ENCODE measurements at regions of chr19 and their contacts with region 1.

Region 1: DNA sequence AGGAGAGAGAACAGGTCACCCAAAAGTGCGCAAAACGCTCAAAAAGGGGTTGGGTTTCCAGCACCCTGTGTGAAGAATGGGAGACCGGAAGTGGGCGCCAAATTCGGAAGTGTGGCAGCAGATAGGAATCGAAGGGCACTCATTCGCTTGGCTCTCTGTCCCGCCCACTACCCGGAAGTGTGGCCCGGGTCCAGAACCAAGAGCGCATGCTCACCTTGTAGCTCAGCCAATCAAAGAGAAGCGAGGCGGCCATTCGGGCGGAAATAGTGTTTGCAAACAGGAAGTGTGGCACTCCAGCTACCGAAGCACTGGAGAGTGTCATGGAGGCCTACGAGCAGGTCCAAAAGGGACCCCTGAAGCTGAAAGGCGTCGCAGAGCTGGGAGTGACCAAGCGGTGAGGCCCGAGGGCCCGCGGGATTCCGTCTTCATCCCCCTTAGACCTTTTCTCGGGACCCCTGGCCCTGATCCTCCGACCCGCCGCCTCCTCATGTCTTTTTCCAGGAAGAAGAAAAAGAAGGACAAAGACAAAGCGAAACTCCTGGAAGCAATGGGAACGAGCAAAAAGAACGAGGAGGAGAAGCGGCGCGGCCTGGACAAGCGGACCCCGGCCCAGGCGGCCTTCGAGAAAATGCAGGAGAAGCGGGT is at the start of gene FAM32A:
- DNase-seq: peak; percentile 91 to 99 (median 99)
- ATAC-seq: peak; percentile 96
- H3K4me3 ChIP-seq: peak within 1 kb of the TSS; percentile 97
- H3K4me3 Mint-ChIP-seq: peak within 1 kb of the TSS; percentile 90 to 100 (median 99)
- H3K27ac ChIP-seq: peak within 1 kb of the TSS; percentile 87
- H3K27ac Mint-ChIP-seq: peak within 1 kb of the TSS; percentile 94 to 100 (median 96)
- H3K4me1 ChIP-seq: peaks cover 13 to 16% of the 10 kb centered on the region in 2 donors
- H3K4me1 Mint-ChIP-seq: peaks cover 9 to 46% (median 36%) of the 10 kb centered on the region in 7 donors
- H3K27me3 ChIP-seq: peaks cover 0 to 4% of the 10 kb centered on the region in 2 donors
- H3K27me3 Mint-ChIP-seq: peaks cover 0 to 2% (median 0%) of the 10 kb centered on the region in 5 donors
- total RNA-seq, gene FAM32A: 45.9 to 69.4 (median 65.9) TPM

Region 2: DNA sequence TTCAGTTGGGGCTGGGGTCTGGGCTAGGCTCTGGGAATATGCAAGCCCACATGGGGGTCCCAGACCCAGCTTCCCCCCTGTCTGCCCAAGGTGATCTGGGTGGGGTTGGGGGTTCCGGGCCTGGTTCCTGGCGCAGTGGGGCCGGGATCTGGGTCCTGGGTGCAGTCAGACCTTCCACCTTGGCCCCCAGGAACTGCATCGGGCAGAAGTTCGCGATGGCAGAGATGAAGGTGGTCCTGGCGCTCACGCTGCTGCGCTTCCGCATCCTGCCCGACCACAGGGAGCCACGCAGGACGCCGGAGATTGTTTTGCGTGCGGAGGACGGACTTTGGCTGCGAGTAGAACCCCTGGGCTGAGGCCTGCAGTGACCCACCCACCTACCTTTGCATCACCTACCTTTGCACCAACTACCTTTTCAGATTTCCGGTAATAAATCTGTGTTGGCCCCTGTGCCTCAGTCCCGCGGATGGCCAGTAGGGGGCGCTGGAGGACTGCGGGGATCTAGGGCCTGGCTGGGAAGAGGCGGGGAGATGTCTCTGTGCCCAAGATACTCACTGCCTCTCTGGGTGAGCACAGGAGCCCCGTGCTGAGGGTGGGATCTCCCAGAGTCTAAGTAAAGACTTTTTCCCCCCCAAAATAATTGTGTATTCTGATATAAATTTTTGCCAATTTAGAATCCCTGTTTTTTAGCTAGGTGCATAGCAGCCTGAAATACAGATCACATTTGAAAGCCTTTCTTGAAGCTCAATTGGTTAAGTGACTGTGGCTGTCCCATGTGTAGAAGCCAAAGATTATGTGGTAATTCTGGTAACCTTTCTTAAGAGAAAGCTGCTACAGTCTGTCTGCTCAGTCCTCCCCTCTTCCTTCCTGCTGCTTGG is 556.0 kb before region 1 on chr19:
- CTCF ChIA-PET with region 1: no interaction called
- POLR2A ChIA-PET with region 1: no interaction called
- intact Hi-C with region 1: loop called in 1 of 2 experiments (anchors 1 kb)
- DNase-seq: peak; percentile 74 to 94 (median 85)
- ATAC-seq: peak; percentile 98
- H3K4me3 ChIP-seq: no peak overlapping the region
- H3K4me3 Mint-ChIP-seq: peak overlapping the region in 2 of 10 donors; percentile 6 to 37
- H3K27ac ChIP-seq: no peak overlapping the region
- H3K27ac Mint-ChIP-seq: peak overlapping the region in 1 of 9 donors; percentile 67
- H3K4me1 ChIP-seq: peaks cover 0 to 6% of the 10 kb centered on the region in 2 donors
- H3K4me1 Mint-ChIP-seq: no peaks in the 10 kb centered on the region
- H3K27me3 ChIP-seq: no peaks in the 10 kb centered on the region
- H3K27me3 Mint-ChIP-seq: peaks cover 5 to 43% (median 32%) of the 10 kb centered on the region in 5 donors

Region 3: GRCh38 chr19:15992014-15992413 is 193.2 kb before region 1 on chr19:
- CTCF ChIA-PET with region 1: no interaction called
- POLR2A ChIA-PET with region 1: no interaction called
- intact Hi-C with region 1: loop called in 1 of 2 experiments (anchors 2 kb)
- DNase-seq: no peak
- ATAC-seq: no peak
- H3K4me3 ChIP-seq: no peak overlapping the region
- H3K4me3 Mint-ChIP-seq: no peak overlapping the region
- H3K27ac ChIP-seq: no peak overlapping the region
- H3K27ac Mint-ChIP-seq: no peak overlapping the region
- H3K4me1 ChIP-seq: no peaks in the 10 kb centered on the region
- H3K4me1 Mint-ChIP-seq: peaks cover 0 to 5% (median 0%) of the 10 kb centered on the region in 7 donors
- H3K27me3 ChIP-seq: peaks cover 0 to 3% of the 10 kb centered on the region in 2 donors
- H3K27me3 Mint-ChIP-seq: peaks cover 13 to 32% (median 27%) of the 10 kb centered on the region in 5 donors

Region 4: GRCh38 chr19:16111160-16111908 is 73.9 kb before region 1 on chr19 and contains the start of gene RAB8A:
- CTCF ChIA-PET with region 1: interaction called, 5 read pairs
- POLR2A ChIA-PET with region 1: interaction called, 3 read pairs
- intact Hi-C with region 1: loop called (anchors 1 kb)
- DNase-seq: peak; percentile 98 to 100 (median 99)
- ATAC-seq: peak; percentile 93
- H3K4me3 ChIP-seq: peak within 1 kb of the TSS; percentile 90
- H3K4me3 Mint-ChIP-seq: peak within 1 kb of the TSS; percentile 93 to 99 (median 98)
- H3K27ac ChIP-seq: peak within 1 kb of the TSS; percentile 94
- H3K27ac Mint-ChIP-seq: peak within 1 kb of the TSS; percentile 89 to 99 (median 97)
- H3K4me1 ChIP-seq: peaks cover 10 to 19% of the 10 kb centered on the region in 2 donors
- H3K4me1 Mint-ChIP-seq: peaks cover 23 to 49% (median 40%) of the 10 kb centered on the region in 7 donors
- H3K27me3 ChIP-seq: no peaks in the 10 kb centered on the region
- H3K27me3 Mint-ChIP-seq: no peaks in the 10 kb centered on the region
- total RNA-seq, gene RAB8A: 64.4 to 154 (median 74.5) TPM

Region 5: GRCh38 chr19:16247353-16248182 is 62.3 kb after region 1 on chr19:
- CTCF ChIA-PET with region 1: no interaction called
- POLR2A ChIA-PET with region 1: interaction called, 11 read pairs
- intact Hi-C with region 1: loop called in 1 of 2 experiments (anchors 1 kb)
- DNase-seq: peak; percentile 60 to 89 (median 77)
- ATAC-seq: peak; percentile 95
- H3K4me3 ChIP-seq: no peak overlapping the region
- H3K4me3 Mint-ChIP-seq: peak overlapping the region; percentile 22 to 71 (median 56)
- H3K27ac ChIP-seq: no peak overlapping the region
- H3K27ac Mint-ChIP-seq: peak overlapping the region; percentile 48 to 94 (median 84)
- H3K4me1 ChIP-seq: peaks cover 15 to 24% of the 10 kb centered on the region in 2 donors
- H3K4me1 Mint-ChIP-seq: peaks cover 17 to 38% (median 36%) of the 10 kb centered on the region in 7 donors
- H3K27me3 ChIP-seq: no peaks in the 10 kb centered on the region
- H3K27me3 Mint-ChIP-seq: peaks cover 0 to 7% (median 0%) of the 10 kb centered on the region in 5 donors

Region 6: GRCh38 chr19:16417660-16418596 is 232.7 kb after region 1 on chr19:
- CTCF ChIA-PET with region 1: interaction called, 12 read pairs
- POLR2A ChIA-PET with region 1: interaction called, 12 read pairs
- intact Hi-C with region 1: loop called (anchors 1 to 2 kb)
- DNase-seq: peak; percentile 62 to 82 (median 66)
- ATAC-seq: peak; percentile 93
- H3K4me3 ChIP-seq: no peak overlapping the region
- H3K4me3 Mint-ChIP-seq: no peak overlapping the region
- H3K27ac ChIP-seq: no peak overlapping the region
- H3K27ac Mint-ChIP-seq: peak overlapping the region in 5 of 9 donors; percentile 28 to 72 (median 63)
- H3K4me1 ChIP-seq: no peaks in the 10 kb centered on the region
- H3K4me1 Mint-ChIP-seq: peaks cover 2 to 14% (median 6%) of the 10 kb centered on the region in 7 donors
- H3K27me3 ChIP-seq: no peaks in the 10 kb centered on the region
- H3K27me3 Mint-ChIP-seq: no peaks in the 10 kb centered on the region